AG04450 (cell line): ENCODE measurements at regions of chr16 and their contacts with region 1.

Region 1: GRCh38 chr16:16127469-16128116 is 95.7 kb downstream of the ABCC6 start:
- DNase-seq: peak; percentile 24
- H3K4me3 ChIP-seq: no peak overlapping the region
- H3K27ac ChIP-seq: peak overlapping the region; percentile 21
- H3K27me3 ChIP-seq: no peaks in the 10 kb centered on the region
- CTCF ChIP-seq: peak; percentile 79

Region 2: DNA sequence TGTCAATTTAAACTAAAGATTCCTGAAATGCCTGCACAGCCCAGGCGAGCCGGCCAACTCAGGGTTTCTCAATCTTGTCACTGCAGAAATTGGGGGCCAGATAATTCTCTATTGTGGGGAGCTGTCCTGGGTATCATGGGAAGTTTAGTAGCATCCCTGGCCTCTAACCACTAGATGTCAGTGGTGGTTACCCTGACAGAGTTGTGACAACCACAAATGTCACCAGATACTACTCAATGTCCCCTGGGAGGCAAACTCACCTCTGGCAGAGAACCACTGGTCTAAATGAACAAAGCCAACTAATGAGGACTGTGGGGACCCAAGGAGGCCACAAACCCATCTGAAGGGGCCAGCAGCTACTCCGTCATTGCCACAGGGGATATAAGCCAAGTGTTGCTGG is 361.7 kb before region 1 on chr16:
- CTCF ChIA-PET with region 1: interaction called, 10 read pairs
- POLR2A ChIA-PET with region 1: no interaction called
- DNase-seq: no peak
- H3K4me3 ChIP-seq: no peak overlapping the region
- H3K27ac ChIP-seq: no peak overlapping the region
- H3K27me3 ChIP-seq: peaks cover 10% of the 10 kb centered on the region
- CTCF ChIP-seq: peak; percentile 81

Region 3: DNA sequence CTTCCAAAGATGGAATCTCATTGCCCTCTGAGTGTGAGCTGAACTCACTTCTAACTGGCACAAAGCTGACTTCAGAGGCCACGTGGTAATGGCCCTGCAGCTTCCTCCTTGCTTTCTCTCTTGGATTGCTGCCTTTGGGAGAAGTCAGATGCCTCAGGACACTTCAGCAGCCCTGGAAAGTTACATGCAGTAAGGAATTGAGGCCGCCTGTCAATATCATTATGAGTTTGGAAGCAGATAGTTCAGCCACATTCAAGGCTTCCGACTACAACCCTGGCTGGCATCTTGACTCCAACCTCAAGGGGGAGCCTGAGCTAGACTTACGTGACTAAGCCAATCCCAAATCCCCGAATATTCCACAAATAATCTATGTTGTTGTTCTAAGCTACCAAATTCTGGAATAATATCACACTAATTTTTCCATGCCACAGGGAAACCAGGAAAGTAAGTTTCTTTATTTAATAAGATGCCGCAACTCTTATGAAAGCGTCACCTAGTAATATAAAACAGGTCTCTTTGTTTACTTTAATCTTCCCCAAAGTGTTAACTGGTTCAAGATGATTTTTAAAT is 252.8 kb before region 1 on chr16:
- CTCF ChIA-PET with region 1: interaction called, 10 read pairs
- POLR2A ChIA-PET with region 1: no interaction called
- DNase-seq: peak; percentile 52
- H3K4me3 ChIP-seq: no peak overlapping the region
- H3K27ac ChIP-seq: no peak overlapping the region
- H3K27me3 ChIP-seq: no peaks in the 10 kb centered on the region
- CTCF ChIP-seq: peak; percentile 87

Region 4: DNA sequence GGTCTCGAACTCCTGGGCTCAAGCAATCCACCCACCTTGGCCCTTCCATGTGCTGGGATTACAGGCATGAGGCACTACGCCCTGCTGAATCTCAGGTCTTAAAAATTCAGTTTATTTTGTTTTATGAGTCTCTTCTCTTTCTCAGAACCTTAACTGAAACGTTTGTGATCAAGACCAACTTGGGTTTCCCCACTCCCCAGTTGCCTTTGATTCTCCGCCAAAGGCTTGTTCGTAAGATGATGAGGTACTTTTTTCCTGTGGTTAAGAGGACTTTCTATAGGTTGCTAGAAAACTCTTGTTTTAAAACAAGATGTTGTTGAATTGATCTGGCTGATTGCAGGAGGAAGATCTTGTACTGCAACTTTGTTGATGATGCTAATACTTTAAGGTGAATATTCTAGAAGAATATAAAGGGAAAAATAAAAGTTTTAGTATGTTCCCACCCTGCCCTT is 166.5 kb before region 1 on chr16:
- CTCF ChIA-PET with region 1: no interaction called
- POLR2A ChIA-PET with region 1: no interaction called
- DNase-seq: no peak
- H3K4me3 ChIP-seq: no peak overlapping the region
- H3K27ac ChIP-seq: peak overlapping the region; percentile 47
- H3K27me3 ChIP-seq: no peaks in the 10 kb centered on the region
- CTCF ChIP-seq: no peak

Region 5: DNA sequence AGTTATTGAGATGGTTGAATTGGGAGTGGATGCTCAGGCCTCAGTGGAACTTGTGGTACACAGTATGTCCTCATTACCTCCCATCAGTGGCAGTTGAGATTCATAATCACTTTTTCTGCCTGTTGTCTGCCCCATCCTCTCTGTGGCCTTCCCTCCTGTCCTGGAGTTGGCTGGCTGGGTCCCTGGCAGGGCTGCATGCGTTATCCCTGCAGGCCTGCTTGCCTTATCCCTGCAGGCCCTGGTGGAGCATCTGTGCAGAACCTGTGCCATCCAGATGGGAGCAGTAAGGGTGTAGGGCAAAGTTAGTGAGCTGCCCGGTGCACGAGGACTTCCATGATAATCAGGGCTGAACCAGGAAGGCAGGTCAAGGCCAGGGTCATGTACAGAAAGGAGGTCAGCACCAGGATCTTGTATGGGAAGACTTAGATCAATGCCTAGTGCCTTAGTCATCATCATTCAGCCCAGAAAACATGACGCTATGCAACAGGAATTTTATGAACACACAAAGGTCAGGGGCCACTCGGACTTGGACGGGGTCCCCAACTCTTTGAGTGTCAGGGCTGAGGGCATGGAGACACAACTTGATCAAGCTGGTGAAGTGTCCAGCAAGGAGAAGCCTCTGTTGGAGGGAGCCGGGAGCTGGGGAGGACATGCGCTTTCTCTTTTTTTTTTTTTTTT is 131.0 kb before region 1 on chr16:
- CTCF ChIA-PET with region 1: interaction called, 10 read pairs
- POLR2A ChIA-PET with region 1: no interaction called
- DNase-seq: peak; percentile 73
- H3K4me3 ChIP-seq: no peak overlapping the region
- H3K27ac ChIP-seq: peak overlapping the region; percentile 95
- H3K27me3 ChIP-seq: no peaks in the 10 kb centered on the region
- CTCF ChIP-seq: no peak

Region 6: GRCh38 chr16:16073891-16074881 is 53.4 kb before region 1 on chr16:
- CTCF ChIA-PET with region 1: no interaction called
- POLR2A ChIA-PET with region 1: interaction called, 12 read pairs
- DNase-seq: peak; percentile 81
- H3K4me3 ChIP-seq: no peak overlapping the region
- H3K27ac ChIP-seq: peak overlapping the region; percentile 85
- H3K27me3 ChIP-seq: no peaks in the 10 kb centered on the region
- CTCF ChIP-seq: no peak; the same call in 1 of the 2 replicates

Region 7: DNA sequence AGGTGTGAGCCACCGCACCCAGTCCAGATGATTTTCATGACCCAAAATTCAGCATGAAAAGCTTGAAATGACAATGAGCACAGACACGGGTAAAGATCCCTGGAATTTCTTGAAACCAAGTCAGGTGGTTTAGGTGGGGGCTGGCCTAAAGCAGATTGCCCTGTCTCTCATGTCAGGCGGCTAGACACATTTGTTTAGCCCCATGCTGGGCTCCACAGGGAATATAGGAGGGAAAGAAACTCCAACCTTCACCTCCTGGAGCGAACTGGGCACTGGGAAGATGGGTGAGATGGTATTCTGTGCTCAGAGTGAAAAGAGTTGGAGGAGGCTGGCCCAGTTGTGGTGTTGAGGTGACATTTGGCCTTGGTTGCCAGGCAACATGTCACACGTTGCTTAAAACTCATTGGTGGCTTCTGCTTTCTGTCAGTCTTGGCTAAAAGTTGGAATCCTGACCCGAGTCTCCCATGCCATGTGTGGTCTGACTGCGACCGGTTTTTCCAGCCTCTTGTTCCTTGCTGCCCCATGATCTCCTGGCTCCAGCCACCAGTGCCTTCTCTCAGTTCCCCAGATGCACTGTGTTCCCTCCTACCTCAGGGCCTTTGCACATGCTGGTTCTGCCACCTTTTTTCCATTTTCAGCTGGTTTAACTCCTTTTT is 18.0 kb before region 1 on chr16:
- CTCF ChIA-PET with region 1: no interaction called
- POLR2A ChIA-PET with region 1: no interaction called
- DNase-seq: no peak
- H3K4me3 ChIP-seq: no peak overlapping the region
- H3K27ac ChIP-seq: no peak overlapping the region
- H3K27me3 ChIP-seq: no peaks in the 10 kb centered on the region
- CTCF ChIP-seq: no peak